PC-9 (cell line): ENCODE measurements at regions of chr6 and their contacts with region 1.

Region 1: DNA sequence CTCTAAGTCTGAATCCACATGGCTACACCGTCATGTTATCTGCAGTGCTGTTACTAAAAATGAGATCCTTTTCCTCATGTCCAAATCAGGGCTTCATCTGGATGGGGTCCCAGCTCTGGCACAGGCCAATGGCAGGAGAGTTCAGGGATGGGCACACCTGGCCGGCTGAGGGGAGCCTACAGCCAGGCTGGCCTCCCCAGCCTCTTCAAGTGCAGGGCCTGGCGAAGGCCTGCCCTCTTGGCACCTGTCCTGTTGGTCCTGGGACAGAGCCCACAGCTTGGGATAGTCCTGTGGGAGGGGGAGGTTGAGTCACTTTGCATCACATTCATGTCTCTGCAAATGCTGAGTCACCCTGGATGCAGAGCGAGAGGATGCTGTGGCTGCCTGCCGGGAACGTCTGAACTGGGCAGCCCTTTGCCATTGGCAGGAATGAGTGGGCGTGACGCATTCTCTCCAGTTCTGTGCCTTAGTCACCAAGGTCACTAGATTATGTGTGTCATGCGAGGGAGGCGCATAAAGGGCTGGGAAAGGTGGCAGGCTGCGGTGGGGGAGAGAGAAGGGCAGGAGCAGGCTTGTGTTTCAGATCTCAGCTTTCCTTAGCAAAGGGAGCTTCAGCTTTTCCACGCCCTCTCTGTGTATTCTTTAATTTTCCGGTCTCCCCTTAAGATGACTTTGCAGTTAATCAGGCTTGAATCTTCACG is 223.2 kb upstream of the ECI2 start:
- DNase-seq: peak; percentile 98
- H3K4me3 ChIP-seq: peak overlapping the region; percentile 49; the same call in 1 of the 2 replicates
- H3K27ac ChIP-seq: peak overlapping the region; percentile 100
- H3K4me1 ChIP-seq: peaks cover 55% of the 10 kb centered on the region
- H3K27me3 ChIP-seq: no peaks in the 10 kb centered on the region
- CTCF ChIP-seq: no peak

Region 2: GRCh38 chr6:4319981-4320683 is 38.4 kb before region 1 on chr6:
- CTCF ChIA-PET with region 1: no interaction called
- POLR2A ChIA-PET with region 1: no interaction called
- intact Hi-C with region 1: loop called (anchors 1 kb)
- DNase-seq: peak; percentile 38 to 84
- H3K4me3 ChIP-seq: no peak overlapping the region
- H3K27ac ChIP-seq: peak overlapping the region; percentile 97
- H3K4me1 ChIP-seq: peaks cover 56% of the 10 kb centered on the region
- H3K27me3 ChIP-seq: no peaks in the 10 kb centered on the region
- CTCF ChIP-seq: no peak

Region 3: GRCh38 chr6:4402439-4402976 is 43.9 kb after region 1 on chr6:
- CTCF ChIA-PET with region 1: no interaction called
- POLR2A ChIA-PET with region 1: interaction called, 4 read pairs
- intact Hi-C with region 1: loop called (anchors 5 kb)
- DNase-seq: peak; percentile 25 to 40
- H3K4me3 ChIP-seq: no peak overlapping the region
- H3K27ac ChIP-seq: peak overlapping the region; percentile 51; the same call in 1 of the 2 replicates
- H3K4me1 ChIP-seq: peaks cover 12% of the 10 kb centered on the region
- H3K27me3 ChIP-seq: no peaks in the 10 kb centered on the region
- CTCF ChIP-seq: no peak

Region 4: GRCh38 chr6:4732691-4733315 is 374.2 kb after region 1 on chr6:
- CTCF ChIA-PET with region 1: no interaction called
- POLR2A ChIA-PET with region 1: interaction called, 11 read pairs
- intact Hi-C with region 1: loop called (anchors 2 kb)
- DNase-seq: peak; percentile 84
- H3K4me3 ChIP-seq: peak overlapping the region; percentile 12; the same call in 1 of the 2 replicates
- H3K27ac ChIP-seq: peak overlapping the region; percentile 91
- H3K4me1 ChIP-seq: peaks cover 38% of the 10 kb centered on the region
- H3K27me3 ChIP-seq: no peaks in the 10 kb centered on the region
- CTCF ChIP-seq: no peak